CD8-positive, alpha-beta T cell (primary cell): ENCODE measurements at regions of chrX and their contacts with region 1.

Region 1: DNA sequence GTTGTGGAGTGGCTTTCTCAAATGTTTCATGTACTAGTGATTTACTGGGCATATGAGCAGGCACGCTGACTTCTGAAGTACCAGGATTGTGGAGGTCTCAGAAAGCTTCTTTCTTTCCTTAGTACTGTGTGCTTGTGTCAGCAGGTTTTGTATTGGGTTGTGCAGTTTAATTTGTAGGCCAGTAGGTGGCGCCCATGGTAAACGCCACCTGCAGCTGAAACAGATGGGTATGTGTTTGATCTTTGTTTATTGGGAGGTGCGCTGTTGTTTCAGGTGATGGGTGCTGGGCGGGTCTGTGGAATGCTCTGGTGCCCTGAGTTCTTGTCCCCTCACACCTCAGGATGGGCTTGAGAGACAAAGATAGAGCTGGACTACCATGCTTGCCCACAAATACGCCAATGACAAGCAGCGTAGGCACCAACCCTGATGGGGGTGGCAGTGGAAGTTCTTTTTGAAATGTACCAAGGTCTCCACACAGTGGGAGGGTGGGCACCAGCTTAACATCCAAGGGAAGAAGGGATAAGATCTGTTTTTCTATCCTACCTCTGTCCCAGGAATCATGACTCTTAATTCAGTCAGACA is 141.5 kb downstream of the RPS6KA6 start:
- DNase-seq: peak in 4 of 9 experiments; percentile 0 to 17 (median 4)
- ATAC-seq: no peak
- H3K4me3 ChIP-seq: no peak overlapping the region
- H3K4me3 Mint-ChIP-seq: no peak overlapping the region
- H3K27ac ChIP-seq: no peak overlapping the region
- H3K27ac Mint-ChIP-seq: no peak overlapping the region
- H3K4me1 ChIP-seq: no peaks in the 10 kb centered on the region
- H3K4me1 Mint-ChIP-seq: no peaks in the 10 kb centered on the region
- H3K27me3 ChIP-seq: no peaks in the 10 kb centered on the region
- H3K27me3 Mint-ChIP-seq: no peaks in the 10 kb centered on the region
- CTCF ChIP-seq: no peak

Region 2: GRCh38 chrX:83984961-83985360 is 61.5 kb before region 1 on chrX:
- CTCF ChIA-PET with region 1: no interaction called
- POLR2A ChIA-PET with region 1: no interaction called
- intact Hi-C with region 1: loop called in 1 of 2 experiments (anchors 10 kb)
- DNase-seq: no peak
- ATAC-seq: no peak
- H3K4me3 ChIP-seq: no peak overlapping the region
- H3K4me3 Mint-ChIP-seq: no peak overlapping the region
- H3K27ac ChIP-seq: no peak overlapping the region
- H3K27ac Mint-ChIP-seq: no peak overlapping the region
- H3K4me1 ChIP-seq: no peaks in the 10 kb centered on the region
- H3K4me1 Mint-ChIP-seq: no peaks in the 10 kb centered on the region
- H3K27me3 ChIP-seq: no peaks in the 10 kb centered on the region
- H3K27me3 Mint-ChIP-seq: no peaks in the 10 kb centered on the region
- CTCF ChIP-seq: no peak

Region 3: GRCh38 chrX:84064164-84064563 is 17.7 kb after region 1 on chrX:
- CTCF ChIA-PET with region 1: no interaction called
- POLR2A ChIA-PET with region 1: no interaction called
- intact Hi-C with region 1: no loop called
- DNase-seq: no peak
- ATAC-seq: no peak
- H3K4me3 ChIP-seq: no peak overlapping the region
- H3K4me3 Mint-ChIP-seq: no peak overlapping the region
- H3K27ac ChIP-seq: no peak overlapping the region
- H3K27ac Mint-ChIP-seq: no peak overlapping the region
- H3K4me1 ChIP-seq: no peaks in the 10 kb centered on the region
- H3K4me1 Mint-ChIP-seq: no peaks in the 10 kb centered on the region
- H3K27me3 ChIP-seq: no peaks in the 10 kb centered on the region
- H3K27me3 Mint-ChIP-seq: no peaks in the 10 kb centered on the region
- CTCF ChIP-seq: no peak

Region 4: DNA sequence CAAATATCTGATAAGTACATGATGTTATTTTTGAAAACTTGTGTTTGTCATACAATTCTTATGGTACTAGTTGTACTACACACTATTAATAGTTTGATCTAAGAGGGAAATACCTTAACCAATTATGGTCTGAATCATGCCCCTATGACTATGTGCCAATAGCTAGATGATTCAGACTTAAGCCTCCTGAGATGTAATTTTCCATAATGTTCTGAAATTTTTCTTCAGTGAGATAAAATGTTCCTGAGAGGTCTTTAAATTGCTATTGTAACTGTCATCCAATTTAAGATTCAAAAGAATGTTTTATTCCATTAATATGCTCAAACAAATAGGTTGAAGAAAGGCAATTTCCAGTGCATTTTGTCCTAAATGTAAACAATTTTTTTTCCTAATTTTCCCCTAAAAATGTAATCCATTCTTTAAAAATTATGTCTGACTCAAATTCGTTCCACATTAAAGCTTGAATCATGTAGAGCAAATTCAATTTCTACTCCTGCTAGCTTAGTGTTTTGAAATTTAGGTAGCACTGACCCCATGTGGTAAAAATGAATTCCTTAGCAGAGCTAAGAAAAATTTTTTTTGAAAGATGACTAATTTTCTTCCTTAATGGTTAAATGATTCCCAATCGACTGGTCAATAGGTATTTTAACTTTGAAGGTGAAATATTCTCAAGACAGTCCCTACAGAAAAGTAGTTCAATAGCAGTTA is 1006.3 kb after region 1 on chrX:
- CTCF ChIA-PET with region 1: no interaction called
- POLR2A ChIA-PET with region 1: no interaction called
- intact Hi-C with region 1: loop called (anchors 5 to 10 kb)
- DNase-seq: peak in 1 of 9 experiments; percentile 1
- ATAC-seq: no peak
- H3K4me3 ChIP-seq: no peak overlapping the region
- H3K4me3 Mint-ChIP-seq: no peak overlapping the region
- H3K27ac ChIP-seq: no peak overlapping the region
- H3K27ac Mint-ChIP-seq: no peak overlapping the region
- H3K4me1 ChIP-seq: no peaks in the 10 kb centered on the region
- H3K4me1 Mint-ChIP-seq: no peaks in the 10 kb centered on the region
- H3K27me3 ChIP-seq: no peaks in the 10 kb centered on the region
- H3K27me3 Mint-ChIP-seq: no peaks in the 10 kb centered on the region
- CTCF ChIP-seq: no peak